Activated naive CD4-positive, alpha-beta T cell treated with anti-CD3 and anti-CD28 coated beads for 36 hours (primary cell): ENCODE measurements at regions of chr11 and their contacts with region 1.

Region 1: DNA sequence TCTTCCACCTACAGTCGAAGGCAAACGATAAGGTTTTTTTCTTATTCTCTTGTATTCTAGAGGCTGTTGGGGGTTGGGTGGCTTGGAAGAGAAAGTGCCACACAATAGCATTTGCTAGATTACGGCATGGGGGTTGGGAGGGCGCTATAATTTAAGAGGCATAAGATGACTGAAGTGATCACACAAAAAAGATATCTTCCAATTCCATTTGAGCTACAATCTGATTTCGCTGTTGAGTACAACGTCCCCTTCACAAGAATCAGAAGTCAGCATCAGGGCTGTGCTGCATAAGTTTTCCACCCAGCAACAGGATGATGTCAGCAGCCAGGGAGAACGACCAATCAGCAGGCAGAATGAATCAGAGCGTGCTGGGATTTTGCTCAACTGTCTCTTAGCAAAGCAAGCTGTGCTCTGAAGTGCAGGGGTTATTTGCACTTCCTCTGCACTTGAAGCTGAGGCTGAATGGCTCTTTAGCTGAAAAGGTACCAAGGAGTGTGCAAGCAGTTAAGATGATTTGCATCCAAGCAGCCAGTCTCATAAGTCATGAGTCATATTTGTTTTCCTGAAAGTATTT is 23.2 kb upstream of the SESN3 start:
- DNase-seq: peak; percentile 95
- H3K4me3 Mint-ChIP-seq: peak overlapping the region; percentile 83
- H3K27ac Mint-ChIP-seq: peak overlapping the region; percentile 92
- H3K4me1 Mint-ChIP-seq: peaks cover 47% of the 10 kb centered on the region
- H3K27me3 Mint-ChIP-seq: no peaks in the 10 kb centered on the region

Region 2: DNA sequence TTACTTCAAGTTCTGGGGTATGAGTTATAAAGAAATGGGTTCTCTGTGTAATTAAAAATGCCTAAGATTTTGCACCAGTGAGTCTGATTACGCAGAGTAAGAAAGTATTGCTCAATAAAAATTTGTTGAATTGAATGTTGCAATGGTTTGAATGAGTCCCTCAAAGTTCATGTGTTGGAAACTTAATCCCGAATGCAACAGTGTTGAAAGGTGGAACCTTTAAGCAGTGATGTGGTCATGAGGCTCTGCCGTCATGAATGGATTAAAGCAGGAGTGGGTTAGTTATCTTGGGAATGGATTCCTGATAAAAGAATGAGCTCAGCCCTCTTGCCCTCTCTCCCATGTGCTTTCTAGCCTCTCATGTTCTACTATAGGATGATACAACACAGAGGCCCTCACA is 29.4 kb after region 1 on chr11:
- CTCF ChIA-PET with region 1: no interaction called
- intact Hi-C with region 1: loop called (anchors 1 kb)
- DNase-seq: no peak
- H3K4me3 Mint-ChIP-seq: no peak overlapping the region
- H3K27ac Mint-ChIP-seq: no peak overlapping the region
- H3K4me1 Mint-ChIP-seq: peaks cover 19% of the 10 kb centered on the region
- H3K27me3 Mint-ChIP-seq: no peaks in the 10 kb centered on the region

Region 3: GRCh38 chr11:95299078-95299679 is 45.0 kb after region 1 on chr11:
- CTCF ChIA-PET with region 1: no interaction called
- intact Hi-C with region 1: loop called (anchors 2 kb)
- DNase-seq: peak; percentile 24
- H3K4me3 Mint-ChIP-seq: no peak overlapping the region
- H3K27ac Mint-ChIP-seq: peak overlapping the region; percentile 37
- H3K4me1 Mint-ChIP-seq: peaks cover 31% of the 10 kb centered on the region
- H3K27me3 Mint-ChIP-seq: no peaks in the 10 kb centered on the region

Region 4: DNA sequence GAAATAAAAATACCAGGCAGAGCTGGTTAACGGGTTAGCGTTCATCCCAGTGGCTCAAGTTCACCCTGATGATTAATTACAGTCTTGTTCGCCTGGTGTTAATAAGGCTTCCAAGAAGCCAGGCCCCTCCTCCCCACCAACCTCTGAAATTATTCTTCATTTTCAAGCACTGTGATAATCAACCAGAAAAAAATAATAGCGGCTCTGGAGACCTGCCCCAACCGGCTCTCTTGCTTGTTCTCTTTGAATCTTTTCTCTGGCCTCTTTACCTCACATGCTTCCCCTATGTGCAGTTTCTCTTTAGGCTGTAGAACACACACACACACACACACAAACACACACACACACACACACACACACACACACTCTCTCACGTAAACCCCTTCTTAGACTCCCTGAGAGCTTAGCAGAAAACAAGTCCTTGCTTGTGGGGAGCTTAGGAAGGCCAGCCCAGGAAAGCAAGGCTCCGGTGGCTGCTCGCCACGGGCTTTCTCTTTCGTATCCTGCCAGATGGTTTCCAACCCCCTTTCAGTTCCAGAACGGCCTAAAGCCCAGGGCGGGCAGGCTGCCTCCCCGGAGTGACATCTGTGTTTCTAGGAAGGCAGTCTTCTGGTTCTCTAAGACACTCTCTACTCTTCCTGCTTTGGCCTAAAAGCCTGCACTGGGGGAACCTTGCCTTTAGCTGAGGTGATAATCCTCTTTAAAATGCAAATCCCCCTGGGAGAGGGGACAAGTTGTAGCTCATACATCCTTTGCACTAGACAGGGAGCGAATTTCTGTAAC is 83.1 kb after region 1 on chr11:
- CTCF ChIA-PET with region 1: no interaction called
- intact Hi-C with region 1: loop called (anchors 1 kb)
- DNase-seq: peak; percentile 69
- H3K4me3 Mint-ChIP-seq: no peak overlapping the region
- H3K27ac Mint-ChIP-seq: no peak overlapping the region
- H3K4me1 Mint-ChIP-seq: peaks cover 4% of the 10 kb centered on the region
- H3K27me3 Mint-ChIP-seq: no peaks in the 10 kb centered on the region

Region 5: DNA sequence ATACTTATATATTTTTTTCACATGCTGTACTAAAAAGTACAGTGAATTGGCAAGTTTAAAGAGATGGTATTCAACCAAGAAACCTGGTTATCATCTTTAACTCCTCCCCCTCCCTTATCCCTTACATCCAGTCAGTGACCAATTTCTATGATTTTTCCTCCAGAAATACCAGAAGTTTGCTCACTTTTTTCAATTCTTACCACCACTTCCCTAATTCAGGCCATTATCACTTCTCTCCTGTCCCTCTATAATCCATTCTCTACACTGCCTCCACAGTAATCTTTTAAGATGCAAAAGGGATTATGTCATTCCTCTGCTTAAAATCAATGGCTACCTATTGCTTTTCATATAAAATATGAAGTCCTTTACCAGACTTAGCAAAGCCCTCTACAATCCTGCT is 598.9 kb after region 1 on chr11:
- CTCF ChIA-PET with region 1: no interaction called
- intact Hi-C with region 1: no loop called
- DNase-seq: no peak
- H3K4me3 Mint-ChIP-seq: no peak overlapping the region
- H3K27ac Mint-ChIP-seq: no peak overlapping the region
- H3K4me1 Mint-ChIP-seq: no peaks in the 10 kb centered on the region
- H3K27me3 Mint-ChIP-seq: no peaks in the 10 kb centered on the region